ENCODE measurements at regions of chr21 and their contacts with region 1.

Region 1: DNA sequence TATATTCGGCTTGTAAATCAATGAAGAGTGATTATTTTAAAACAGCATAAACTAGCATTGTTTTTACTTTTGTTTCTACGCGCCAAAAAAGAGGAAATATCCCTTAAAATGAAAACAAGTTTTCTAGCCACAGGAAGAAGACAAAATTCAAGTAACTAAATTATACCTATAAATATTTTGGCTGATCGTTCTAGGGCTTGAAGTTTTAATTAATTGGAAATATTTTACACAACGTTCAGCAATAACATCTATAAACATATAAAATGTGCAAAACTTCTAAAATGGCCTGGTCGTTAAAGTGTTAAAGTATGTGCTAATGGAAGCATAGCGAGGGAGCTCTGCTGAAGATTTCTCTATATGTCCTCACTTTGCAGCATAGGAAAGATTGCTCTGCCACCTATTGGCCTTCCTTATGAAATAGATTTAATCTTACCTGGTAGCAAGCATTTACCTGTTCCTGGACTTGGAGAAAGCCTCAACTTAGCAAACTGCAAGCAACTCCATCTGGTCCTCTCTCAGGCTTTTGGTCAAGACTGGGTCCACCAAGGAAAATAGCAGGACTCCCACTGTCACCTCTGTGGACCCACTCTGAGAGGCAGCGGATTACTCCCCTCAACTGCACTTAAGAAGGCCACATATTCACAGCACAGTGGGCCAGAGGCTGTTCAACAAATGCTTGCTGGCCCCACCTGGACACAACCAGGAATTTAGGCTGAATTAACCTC is 351.3 kb upstream of the RUNX1 start:
- DNase-seq: peak; percentile 81
- H3K4me3 Mint-ChIP-seq: no peak overlapping the region
- H3K27ac Mint-ChIP-seq: no peak overlapping the region
- H3K4me1 Mint-ChIP-seq: peaks cover 28% of the 10 kb centered on the region
- H3K27me3 Mint-ChIP-seq: peaks cover 9% of the 10 kb centered on the region

Region 2: GRCh38 chr21:34745557-34746255 is 654.7 kb before region 1 on chr21:
- intact Hi-C with region 1: loop called (anchors 5 kb)
- DNase-seq: peak; percentile 87
- H3K4me3 Mint-ChIP-seq: peak overlapping the region; percentile 52
- H3K27ac Mint-ChIP-seq: no peak overlapping the region
- H3K4me1 Mint-ChIP-seq: peaks cover 3% of the 10 kb centered on the region
- H3K27me3 Mint-ChIP-seq: peaks cover 18% of the 10 kb centered on the region

Region 3: GRCh38 chr21:35095859-35096291 is 304.5 kb before region 1 on chr21:
- intact Hi-C with region 1: loop called (anchors 1 kb)
- DNase-seq: no peak
- H3K4me3 Mint-ChIP-seq: no peak overlapping the region
- H3K27ac Mint-ChIP-seq: peak overlapping the region; percentile 92
- H3K4me1 Mint-ChIP-seq: peaks cover 29% of the 10 kb centered on the region
- H3K27me3 Mint-ChIP-seq: no peaks in the 10 kb centered on the region

Region 4: DNA sequence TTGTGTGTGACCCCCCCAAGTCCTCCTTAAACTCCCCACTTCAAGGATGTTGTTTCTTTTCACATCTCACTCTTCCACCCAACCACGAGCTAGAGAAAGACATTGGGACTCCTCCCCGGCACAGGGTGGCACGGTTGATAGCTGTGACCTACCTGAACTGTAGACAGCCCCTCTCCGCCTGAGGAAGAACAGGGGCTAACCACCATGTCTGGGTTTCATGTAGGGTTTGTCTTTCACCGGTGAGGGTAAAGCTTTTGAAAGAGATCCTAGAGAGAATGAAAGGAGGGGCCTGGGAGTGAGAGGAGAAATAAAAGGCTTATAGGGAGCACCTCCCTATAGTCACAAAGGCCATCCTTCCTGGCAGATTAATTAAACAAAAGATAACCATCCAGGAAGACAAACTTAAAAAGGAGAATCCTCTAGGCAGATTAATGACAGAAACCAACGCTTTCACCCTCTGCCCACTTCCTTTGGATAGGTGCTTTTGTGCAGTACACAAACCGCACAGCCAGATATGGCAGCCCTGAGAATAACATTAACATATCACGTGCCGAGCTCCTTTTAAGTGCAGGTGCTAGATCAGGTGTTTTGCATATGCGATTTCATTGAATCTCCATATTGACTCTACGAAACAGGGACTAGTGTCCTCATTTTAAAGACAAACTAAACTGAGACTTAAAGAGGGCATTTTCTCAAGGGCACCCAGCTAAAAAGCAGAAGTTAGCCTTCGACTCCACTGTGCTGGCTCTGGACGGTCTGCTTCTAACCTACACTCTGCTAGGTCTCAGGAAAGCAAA is 173.2 kb before region 1 on chr21:
- intact Hi-C with region 1: loop called (anchors 5 kb)
- DNase-seq: peak; percentile 85
- H3K4me3 Mint-ChIP-seq: peak overlapping the region; percentile 46
- H3K27ac Mint-ChIP-seq: peak overlapping the region; percentile 70
- H3K4me1 Mint-ChIP-seq: peaks cover 30% of the 10 kb centered on the region
- H3K27me3 Mint-ChIP-seq: no peaks in the 10 kb centered on the region

Region 5: DNA sequence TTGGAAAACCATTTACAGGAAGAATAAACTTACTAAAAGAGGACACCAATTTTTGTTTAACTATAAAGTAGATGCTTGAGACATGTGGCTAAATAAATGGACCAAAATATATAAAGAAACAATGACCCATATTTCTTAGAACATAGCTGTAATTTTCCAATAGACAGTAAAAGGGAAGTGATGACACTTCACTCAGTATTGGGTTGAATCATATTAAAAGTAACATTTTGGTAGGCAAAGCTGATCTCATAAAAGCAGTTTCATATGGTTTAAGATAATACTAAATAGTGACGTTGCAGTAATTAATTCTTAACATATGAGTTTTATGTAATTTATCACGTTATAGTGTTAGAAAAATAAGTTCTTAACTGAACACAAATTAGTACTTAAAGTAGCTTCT is 42.4 kb before region 1 on chr21:
- intact Hi-C with region 1: loop called (anchors 5 kb)
- DNase-seq: no peak
- H3K4me3 Mint-ChIP-seq: no peak overlapping the region
- H3K27ac Mint-ChIP-seq: peak overlapping the region; percentile 83
- H3K4me1 Mint-ChIP-seq: peaks cover 12% of the 10 kb centered on the region
- H3K27me3 Mint-ChIP-seq: no peaks in the 10 kb centered on the region

Measured in activated CD4-positive, alpha-beta T cell treated with anti-CD3 and anti-CD28 coated beads, Interleukin-2, amount 10 ng/mL, durations not matched to agents 24 days and 14 days (primary cell).